ENCODE measurements at regions of chr20 and their contacts with region 1.

Region 1: DNA sequence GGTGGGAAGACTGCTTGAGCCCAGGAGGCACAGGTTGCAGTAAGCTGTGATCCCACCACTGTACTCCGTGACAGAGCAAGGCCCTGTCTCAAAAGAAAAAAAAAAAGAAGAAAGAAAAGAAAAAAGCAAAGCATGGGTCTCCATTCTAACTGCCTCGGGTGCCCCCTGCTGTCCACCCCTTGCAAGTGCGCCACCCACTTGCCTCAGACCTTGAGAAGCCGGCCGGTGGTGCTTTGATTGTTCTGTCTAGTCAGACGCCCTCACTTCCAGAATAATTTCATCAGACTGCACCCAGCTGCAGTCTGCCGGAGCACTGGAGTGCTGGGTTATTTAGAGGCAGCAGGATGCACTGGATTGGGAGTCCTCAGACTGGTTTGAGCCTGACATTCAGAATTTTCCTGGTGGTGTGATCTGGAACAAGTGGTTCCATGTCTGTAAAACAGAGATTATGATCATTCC is 17.6 kb upstream of the TM9SF4 start:
- DNase-seq: peak; percentile 16
- H3K4me3 ChIP-seq: no peak overlapping the region
- CTCF ChIP-seq: peak; percentile 89

Region 2: DNA sequence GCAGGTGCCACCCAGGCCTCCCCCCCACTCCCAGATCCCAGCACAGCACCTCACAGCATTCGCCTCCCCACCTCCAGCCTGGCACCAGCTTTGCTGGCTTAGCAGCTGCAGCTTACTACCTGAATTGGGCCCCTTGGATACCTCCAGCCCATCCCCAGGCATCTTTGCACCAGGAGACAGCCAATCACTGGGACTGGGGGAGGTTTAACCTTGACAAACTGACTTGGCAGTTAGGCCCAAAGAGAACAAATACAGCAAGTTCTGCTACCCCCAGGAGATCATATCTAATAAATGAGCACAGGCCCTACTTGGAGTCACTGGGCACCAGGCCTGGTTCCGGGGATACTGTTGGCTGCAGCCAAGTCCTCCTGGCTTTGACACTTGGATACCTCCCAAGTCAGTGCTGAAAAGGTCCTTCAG is 148.9 kb before region 1 on chr20:
- CTCF ChIA-PET with region 1: no interaction called
- POLR2A ChIA-PET with region 1: no interaction called
- DNase-seq: no peak
- H3K4me3 ChIP-seq: no peak overlapping the region
- CTCF ChIP-seq: no peak

Region 3: GRCh38 chr20:32062776-32063170 is 29.1 kb before region 1 on chr20:
- CTCF ChIA-PET with region 1: interaction called, 105 read pairs
- POLR2A ChIA-PET with region 1: no interaction called
- DNase-seq: no peak
- H3K4me3 ChIP-seq: no peak overlapping the region
- CTCF ChIP-seq: no peak

Region 4: DNA sequence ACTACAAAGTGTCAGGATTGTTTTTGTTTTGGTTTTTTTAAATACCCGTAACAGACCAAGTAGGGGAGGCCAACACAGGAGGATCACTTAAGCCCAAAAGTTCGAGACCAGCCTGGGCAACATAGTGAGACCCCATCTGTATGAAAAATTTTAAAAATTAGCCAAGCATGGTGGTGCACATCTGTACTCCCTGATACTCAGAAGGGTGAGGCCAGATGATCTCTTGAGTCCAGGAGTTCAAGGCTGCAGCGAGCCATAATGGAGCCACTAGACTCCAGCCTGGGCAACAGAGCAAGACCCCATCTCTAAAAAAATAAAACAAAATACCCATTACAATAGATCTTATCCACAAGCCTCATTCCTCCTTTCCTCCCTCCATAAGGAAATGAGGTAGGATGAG is 11.1 kb before region 1 on chr20:
- CTCF ChIA-PET with region 1: interaction called, 105 read pairs
- POLR2A ChIA-PET with region 1: no interaction called
- DNase-seq: no peak
- H3K4me3 ChIP-seq: no peak overlapping the region
- CTCF ChIP-seq: no peak

Region 5: DNA sequence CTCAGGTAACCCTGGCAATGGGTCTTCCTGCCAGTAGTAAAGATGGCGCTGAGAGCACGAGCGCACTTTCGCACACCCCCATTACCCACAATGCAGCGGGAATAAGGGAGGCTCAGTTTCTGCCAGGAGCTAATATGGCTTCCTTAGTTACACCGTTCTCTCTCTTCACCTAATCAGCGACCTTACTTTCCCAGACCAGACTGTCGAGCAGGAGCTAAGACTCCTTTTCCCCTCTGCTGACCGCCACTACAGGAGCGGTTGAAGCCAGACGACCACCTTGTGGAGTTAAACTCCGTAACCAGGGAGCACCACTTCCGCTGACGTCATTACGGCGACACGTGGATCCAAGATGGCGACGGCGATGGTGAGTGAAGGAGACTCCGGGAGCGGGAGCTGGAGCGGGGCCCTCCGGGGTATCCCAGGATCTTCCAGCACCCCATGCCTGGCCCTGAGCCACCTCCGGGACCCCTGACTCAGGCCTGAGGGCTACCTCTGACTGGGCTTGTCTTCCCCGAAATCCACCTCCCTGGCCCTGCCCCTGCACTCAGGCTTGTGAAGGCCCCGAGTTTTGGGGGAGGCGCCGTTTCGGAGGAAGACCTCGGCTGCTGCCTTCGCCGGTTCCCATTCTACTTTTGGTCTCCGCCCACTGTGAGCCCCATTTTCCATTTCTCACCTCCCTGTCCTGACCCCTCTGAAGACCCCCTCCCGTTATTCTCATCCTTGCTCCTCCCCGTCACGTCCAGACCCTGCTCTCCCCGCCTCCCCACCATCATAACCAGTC is 17.7 kb after region 1 on chr20 and contains the start of gene TM9SF4:
- CTCF ChIA-PET with region 1: interaction called, 31 read pairs
- POLR2A ChIA-PET with region 1: no interaction called
- DNase-seq: peak; percentile 57
- H3K4me3 ChIP-seq: peak within 1 kb of the TSS; percentile 98
- CTCF ChIP-seq: no peak

Measured in AG04449 (cell line).